Natural killer cell (primary cell): ENCODE measurements at regions of chr11 and their contacts with region 1.

Region 1: GRCh38 chr11:128695539-128696221 is 1.8 kb downstream of the FLI1 start:
- DNase-seq: peak in 1 of 2 donors; percentile 73
- ATAC-seq: peak; percentile 32 to 75 (median 46)
- H3K4me3 ChIP-seq: peak overlapping the region; percentile 89
- H3K4me3 Mint-ChIP-seq: peak overlapping the region; percentile 98
- H3K27ac ChIP-seq: peak overlapping the region; percentile 86
- H3K27ac Mint-ChIP-seq: peak overlapping the region; percentile 89 to 99
- H3K4me1 ChIP-seq: peaks cover 59% of the 10 kb centered on the region
- H3K4me1 Mint-ChIP-seq: peaks cover 68 to 79% of the 10 kb centered on the region in 2 donors
- H3K27me3 ChIP-seq: no peaks in the 10 kb centered on the region
- H3K27me3 Mint-ChIP-seq: peaks cover 0 to 8% of the 10 kb centered on the region in 2 donors
- CTCF ChIP-seq: no peak

Region 2: DNA sequence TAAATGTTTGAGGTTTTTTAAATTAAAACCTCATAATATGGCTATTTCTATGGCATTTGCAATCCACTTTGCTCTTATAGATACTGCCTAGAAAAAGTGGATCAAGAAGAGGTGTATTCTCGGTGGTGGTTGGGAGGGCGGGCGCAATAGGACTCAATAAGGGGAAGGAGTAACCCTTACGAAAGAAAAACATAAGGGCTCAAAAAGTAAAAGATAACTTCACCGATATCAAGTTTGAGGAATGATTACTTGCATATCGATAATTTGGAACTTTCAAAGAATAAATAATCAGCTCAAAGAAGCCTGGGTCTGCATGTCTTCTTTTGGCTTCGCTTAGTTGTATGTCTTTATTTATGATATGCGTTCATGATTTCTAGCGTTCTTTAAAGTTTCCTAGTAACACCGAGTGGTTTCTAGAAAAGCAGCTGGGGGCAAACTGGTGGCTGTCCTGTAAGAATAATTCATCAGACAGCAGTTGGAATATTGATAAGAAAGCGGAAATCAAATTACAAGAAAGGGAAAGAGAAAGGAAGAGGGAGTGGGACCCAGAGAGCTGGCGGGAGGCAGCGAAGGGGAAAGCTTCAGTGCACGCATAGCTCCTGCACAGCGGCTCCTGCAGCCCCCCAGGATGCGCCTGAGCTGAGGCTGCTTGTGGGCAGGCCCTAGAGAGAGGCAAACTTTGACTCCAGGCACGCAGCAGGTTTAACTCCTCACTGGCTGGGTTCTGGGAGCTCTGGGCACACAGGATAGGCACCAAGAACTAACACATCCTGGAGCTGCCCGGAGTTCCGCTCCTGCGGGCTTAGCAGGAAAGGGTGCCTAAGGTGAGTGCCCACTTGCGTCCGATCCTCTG is 10.9 kb before region 1 on chr11:
- intact Hi-C with region 1: no loop called
- DNase-seq: peak in 1 of 2 donors; percentile 24
- ATAC-seq: peak in 2 of 3 donors; percentile 19 to 38
- H3K4me3 ChIP-seq: no peak overlapping the region
- H3K4me3 Mint-ChIP-seq: peak overlapping the region; percentile 86
- H3K27ac ChIP-seq: no peak overlapping the region
- H3K27ac Mint-ChIP-seq: no peak overlapping the region
- H3K4me1 ChIP-seq: peaks cover 29% of the 10 kb centered on the region
- H3K4me1 Mint-ChIP-seq: peaks cover 26 to 33% of the 10 kb centered on the region in 2 donors
- H3K27me3 ChIP-seq: peaks cover 31% of the 10 kb centered on the region
- H3K27me3 Mint-ChIP-seq: peaks cover 52 to 56% of the 10 kb centered on the region in 2 donors
- CTCF ChIP-seq: no peak

Region 3: GRCh38 chr11:128720522-128720985 is 24.9 kb after region 1 on chr11:
- intact Hi-C with region 1: loop called (anchors 2 kb)
- DNase-seq: peak; percentile 57 to 71
- ATAC-seq: peak; percentile 72 to 83 (median 82)
- H3K4me3 ChIP-seq: peak overlapping the region; percentile 14
- H3K4me3 Mint-ChIP-seq: peak overlapping the region; percentile 95
- H3K27ac ChIP-seq: peak overlapping the region; percentile 81
- H3K27ac Mint-ChIP-seq: peak overlapping the region; percentile 86 to 94
- H3K4me1 ChIP-seq: peaks cover 97% of the 10 kb centered on the region
- H3K4me1 Mint-ChIP-seq: peaks cover 98% of the 10 kb centered on the region in 2 donors
- H3K27me3 ChIP-seq: no peaks in the 10 kb centered on the region
- H3K27me3 Mint-ChIP-seq: peaks cover 0 to 2% of the 10 kb centered on the region in 2 donors
- CTCF ChIP-seq: no peak

Region 4: DNA sequence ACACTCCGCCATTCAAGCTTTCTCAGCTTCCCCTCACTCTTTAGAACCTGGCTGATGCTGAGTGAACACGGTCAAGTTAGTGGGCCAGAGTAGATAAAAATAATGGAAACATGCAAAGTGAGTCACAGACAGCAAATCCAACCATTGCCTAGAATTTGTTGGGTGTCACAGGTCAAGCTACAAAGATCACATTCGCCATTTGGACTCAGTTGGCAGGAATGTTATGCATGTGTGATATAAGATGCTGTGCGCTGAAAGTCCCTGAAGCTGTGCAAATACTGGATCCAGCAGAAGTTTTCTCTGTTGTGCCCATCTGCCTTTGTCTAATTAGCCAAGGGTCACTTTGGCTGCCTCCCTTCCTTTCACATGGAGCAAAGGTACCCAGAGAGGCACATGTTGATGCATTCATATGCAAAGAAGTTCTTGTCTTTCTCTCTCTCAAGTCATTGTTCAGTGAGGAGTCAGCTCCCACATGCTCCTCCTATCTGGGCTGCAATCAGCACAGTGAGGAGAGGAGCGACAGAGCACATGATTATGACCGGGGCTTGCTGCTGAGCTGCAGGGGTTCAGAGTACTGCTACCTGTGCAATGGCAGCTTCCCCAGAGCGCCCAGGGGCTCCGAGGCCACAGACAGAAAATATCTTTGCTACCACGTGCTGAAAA is 37.9 kb after region 1 on chr11:
- intact Hi-C with region 1: loop called (anchors 5 kb)
- DNase-seq: peak in 1 of 2 donors; percentile 55
- ATAC-seq: no peak
- H3K4me3 ChIP-seq: no peak overlapping the region
- H3K4me3 Mint-ChIP-seq: peak overlapping the region; percentile 88
- H3K27ac ChIP-seq: peak overlapping the region; percentile 72
- H3K27ac Mint-ChIP-seq: peak overlapping the region; percentile 86 to 94
- H3K4me1 ChIP-seq: peaks cover 93% of the 10 kb centered on the region
- H3K4me1 Mint-ChIP-seq: peaks cover 97 to 100% of the 10 kb centered on the region in 2 donors
- H3K27me3 ChIP-seq: no peaks in the 10 kb centered on the region
- H3K27me3 Mint-ChIP-seq: no peaks in the 10 kb centered on the region
- CTCF ChIP-seq: no peak

Region 5: DNA sequence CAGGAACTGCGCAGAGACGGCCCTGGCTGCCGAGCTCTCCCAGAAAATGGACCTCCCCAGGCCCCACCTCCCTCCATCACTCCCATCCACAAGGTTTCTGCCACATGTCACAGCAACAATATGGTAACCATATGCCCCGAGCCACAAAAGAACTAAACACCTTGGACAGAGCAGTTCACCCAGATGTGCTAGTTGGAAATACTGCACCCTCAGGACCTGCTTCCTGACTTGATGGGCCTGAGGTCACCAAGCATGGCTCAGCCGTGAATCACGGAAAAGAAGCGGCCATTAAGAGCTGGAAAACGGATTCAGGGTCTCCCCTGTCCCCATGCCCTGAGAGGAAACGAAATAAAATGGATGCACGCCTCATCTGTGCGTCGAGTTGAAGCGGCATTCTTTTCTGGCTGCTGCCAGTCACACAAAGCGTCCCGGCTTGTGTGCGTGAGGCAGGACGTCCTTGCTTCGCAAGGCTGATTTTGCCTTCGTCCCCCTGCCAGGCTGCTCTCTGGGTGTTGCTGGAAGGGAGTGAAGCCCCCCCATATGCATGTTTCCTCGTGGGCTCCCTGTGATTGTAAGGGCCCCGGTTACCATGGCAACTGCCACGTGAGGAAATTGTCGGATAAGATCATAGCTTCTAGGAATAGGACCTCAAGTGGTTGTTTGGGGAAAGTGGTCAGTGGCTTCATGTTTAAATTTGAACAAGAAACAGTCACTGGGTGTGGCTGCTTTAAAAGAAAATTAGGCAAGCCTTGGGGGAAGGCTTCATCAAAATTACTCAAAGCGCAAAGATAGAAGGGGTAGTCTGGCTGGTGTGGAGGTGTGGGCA is 49.8 kb after region 1 on chr11:
- intact Hi-C with region 1: loop called (anchors 5 kb)
- DNase-seq: no peak
- ATAC-seq: peak in 2 of 3 donors; percentile 16 to 54
- H3K4me3 ChIP-seq: no peak overlapping the region
- H3K4me3 Mint-ChIP-seq: no peak overlapping the region
- H3K27ac ChIP-seq: peak overlapping the region; percentile 26
- H3K27ac Mint-ChIP-seq: peak overlapping the region; percentile 95 to 97
- H3K4me1 ChIP-seq: peaks cover 75% of the 10 kb centered on the region
- H3K4me1 Mint-ChIP-seq: peaks cover 90 to 91% of the 10 kb centered on the region in 2 donors
- H3K27me3 ChIP-seq: no peaks in the 10 kb centered on the region
- H3K27me3 Mint-ChIP-seq: no peaks in the 10 kb centered on the region
- CTCF ChIP-seq: no peak